ENCODE measurements at regions of chr17 and their contacts with region 1.

Region 1: DNA sequence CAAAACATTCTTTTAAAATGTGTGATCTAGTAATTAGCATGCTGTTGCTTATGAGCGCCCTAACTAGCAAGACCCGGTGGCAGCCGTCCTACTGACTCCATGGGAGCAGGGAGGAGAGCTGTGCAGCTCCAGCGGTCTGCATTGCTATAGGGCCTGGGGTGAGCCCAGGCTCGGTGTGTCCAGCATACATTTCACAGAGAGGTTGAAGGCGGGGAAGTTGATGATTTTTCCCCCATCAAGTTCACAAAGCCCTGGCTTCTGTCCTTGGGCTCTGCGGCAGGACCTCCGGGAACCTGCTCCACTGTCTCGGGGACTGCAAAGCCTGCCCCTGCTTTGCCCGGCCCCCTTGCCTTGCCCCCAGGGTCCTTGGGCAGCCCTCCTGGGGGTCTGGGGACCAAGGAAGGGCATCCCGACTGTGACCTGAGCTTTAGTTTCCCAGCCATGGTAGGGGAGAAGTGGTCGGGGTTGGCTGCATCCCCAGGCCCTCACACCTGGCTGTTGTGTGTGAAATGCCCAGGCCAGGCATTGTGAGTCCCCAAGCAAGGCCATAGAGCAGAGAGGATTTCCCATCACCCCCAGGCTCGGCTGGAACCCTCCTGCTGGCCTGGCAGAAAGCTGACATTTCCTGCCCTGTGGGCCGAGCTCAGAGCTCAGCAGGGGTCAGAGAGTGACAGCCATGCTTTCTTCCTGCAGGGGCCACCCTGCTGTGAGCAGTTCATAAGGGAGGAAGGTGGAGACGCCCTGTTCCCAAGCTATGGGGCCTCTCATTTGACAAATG is 24.8 kb downstream of the KCNJ12 start:
- DNase-seq: no peak
- ATAC-seq: no peak
- H3K4me3 ChIP-seq: no peak overlapping the region
- H3K27ac ChIP-seq: no peak overlapping the region
- H3K4me1 ChIP-seq: peaks cover 9% of the 10 kb centered on the region
- H3K27me3 ChIP-seq: no peaks in the 10 kb centered on the region
- CTCF ChIP-seq: no peak

Region 2: GRCh38 chr17:21345236-21345635 is 55.8 kb before region 1 on chr17:
- intact Hi-C with region 1: no loop called
- DNase-seq: peak; percentile 58
- ATAC-seq: peak; percentile 1
- H3K4me3 ChIP-seq: no peak overlapping the region
- H3K27ac ChIP-seq: no peak overlapping the region
- H3K4me1 ChIP-seq: no peaks in the 10 kb centered on the region
- H3K27me3 ChIP-seq: no peaks in the 10 kb centered on the region
- CTCF ChIP-seq: no peak

Region 3: DNA sequence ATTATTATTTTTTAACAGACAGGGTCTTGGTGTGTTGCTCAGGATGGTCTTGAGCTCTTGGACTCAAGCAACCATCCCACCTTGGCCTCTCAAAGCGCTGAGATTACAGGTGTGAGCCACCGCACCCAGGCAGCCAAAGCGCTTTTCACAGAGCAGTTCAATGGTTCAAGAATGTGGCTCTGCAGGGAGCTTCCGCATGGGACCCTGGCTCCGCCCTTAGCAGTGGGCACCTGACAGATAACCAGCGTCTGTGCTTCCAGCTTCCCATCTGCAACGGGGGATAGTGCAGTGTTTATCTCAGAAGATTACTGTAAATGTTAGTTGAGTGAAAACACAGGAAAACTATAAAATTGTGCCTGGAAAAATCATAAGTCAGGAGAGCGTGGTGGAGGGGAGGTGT is 74.6 kb after region 1 on chr17:
- intact Hi-C with region 1: no loop called
- DNase-seq: no peak
- ATAC-seq: no peak
- H3K4me3 ChIP-seq: no peak overlapping the region
- H3K27ac ChIP-seq: no peak overlapping the region
- H3K4me1 ChIP-seq: no peaks in the 10 kb centered on the region
- H3K27me3 ChIP-seq: peaks cover 6% of the 10 kb centered on the region
- CTCF ChIP-seq: no peak

Region 4: GRCh38 chr17:21687136-21687953 is 286.3 kb after region 1 on chr17:
- intact Hi-C with region 1: loop called (anchors 2 kb)
- DNase-seq: no peak
- ATAC-seq: peak; percentile 23
- H3K4me3 ChIP-seq: no peak overlapping the region
- H3K27ac ChIP-seq: no peak overlapping the region
- H3K4me1 ChIP-seq: no peaks in the 10 kb centered on the region
- H3K27me3 ChIP-seq: no peaks in the 10 kb centered on the region
- CTCF ChIP-seq: no peak